IMR-90 (cell line): ENCODE measurements at regions of chr20 and their contacts with region 1.

Region 1: GRCh38 chr20:54132612-54133433 is 41.0 kb downstream of the CYP24A1 start:
- DNase-seq: peak; percentile 98
- ATAC-seq: peak; percentile 88
- H3K4me3 ChIP-seq: peak overlapping the region; percentile 9; the same call in 1 of the 2 replicates
- H3K27ac ChIP-seq: peak overlapping the region; percentile 94
- H3K4me1 ChIP-seq: peaks cover 13% of the 10 kb centered on the region
- H3K27me3 ChIP-seq: no peaks in the 10 kb centered on the region
- CTCF ChIP-seq: no peak
- POLR2A ChIP-seq: no peak
- RAD21 ChIP-seq: no peak

Region 2: DNA sequence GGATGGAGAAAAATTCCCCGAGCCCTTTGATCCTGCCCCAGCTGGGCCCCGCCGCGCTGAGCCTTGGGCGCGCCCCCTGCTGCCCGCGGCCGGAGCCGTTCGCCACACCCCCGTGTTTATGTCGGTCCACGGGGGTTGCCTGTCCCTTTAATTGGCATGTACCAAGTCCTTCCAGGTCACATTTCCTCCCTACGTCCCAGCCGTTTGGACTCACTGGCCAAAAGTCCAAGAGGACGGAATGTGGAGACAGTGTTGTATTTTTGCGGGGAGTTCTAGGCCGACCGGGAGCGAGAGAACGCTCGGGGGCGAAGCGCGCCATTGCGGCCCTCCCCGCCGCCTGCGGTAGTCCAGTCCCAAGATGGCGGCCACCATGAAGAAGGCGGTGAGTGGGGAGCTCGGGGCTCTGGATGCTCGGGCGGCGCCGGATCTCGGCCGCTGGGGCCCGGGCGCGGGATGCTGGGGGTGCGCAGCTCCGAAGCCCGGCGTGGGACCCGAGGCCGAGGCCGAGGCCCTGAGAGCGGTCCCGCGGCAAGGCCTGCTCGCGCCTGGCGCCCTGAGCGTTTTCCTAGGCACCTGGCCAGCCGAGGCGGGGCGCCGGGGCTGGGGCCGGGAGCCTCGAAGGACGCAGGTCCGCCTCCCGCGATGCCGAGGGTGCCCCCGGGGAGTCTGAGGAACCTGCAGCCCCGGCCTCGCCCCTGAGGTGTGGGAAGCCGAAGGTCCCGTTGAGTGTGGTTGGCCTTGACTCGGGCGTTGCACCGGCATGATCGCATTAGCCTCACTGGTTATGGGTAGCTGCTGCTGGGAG is 75.1 kb after region 1 on chr20 and contains the start of gene PFDN4:
- CTCF ChIA-PET with region 1: no interaction called
- POLR2A ChIA-PET with region 1: no interaction called
- dilution Hi-C with region 1: no loop called
- in situ Hi-C with region 1: no loop called
- intact Hi-C with region 1: loop called (anchors 2 kb)
- DNase-seq: peak; percentile 79
- ATAC-seq: peak; percentile 94
- H3K4me3 ChIP-seq: peak within 1 kb of the TSS; percentile 79
- H3K27ac ChIP-seq: peak within 1 kb of the TSS; percentile 100
- H3K4me1 ChIP-seq: peaks cover 5% of the 10 kb centered on the region
- H3K27me3 ChIP-seq: peaks cover 1% of the 10 kb centered on the region; the same call in 1 of the 2 replicates
- CTCF ChIP-seq: peak; percentile 89
- POLR2A ChIP-seq: peak; percentile 50; the same call in 1 of the 2 replicates
- RAD21 ChIP-seq: peak; percentile 44
- total RNA-seq, gene PFDN4: 14.9 and 83.9 TPM in 2 replicates

Region 3: GRCh38 chr20:54345301-54345724 is 212.5 kb after region 1 on chr20:
- CTCF ChIA-PET with region 1: no interaction called
- POLR2A ChIA-PET with region 1: no interaction called
- dilution Hi-C with region 1: no loop called
- in situ Hi-C with region 1: no loop called
- intact Hi-C with region 1: loop called (anchors 10 kb)
- DNase-seq: peak; percentile 87
- ATAC-seq: peak; percentile 83
- H3K4me3 ChIP-seq: no peak overlapping the region
- H3K27ac ChIP-seq: peak overlapping the region; percentile 65; the same call in 1 of the 2 replicates
- H3K4me1 ChIP-seq: peaks cover 11% of the 10 kb centered on the region
- H3K27me3 ChIP-seq: no peaks in the 10 kb centered on the region
- CTCF ChIP-seq: no peak
- POLR2A ChIP-seq: no peak
- RAD21 ChIP-seq: no peak